ENCODE measurements at regions of chr4 and their contacts with region 1.

Region 1: GRCh38 chr4:26061248-26061986 is 147.4 kb downstream of the SMIM20 start:
- DNase-seq: peak; percentile 67
- CTCF ChIP-seq: peak; percentile 84

Region 2: DNA sequence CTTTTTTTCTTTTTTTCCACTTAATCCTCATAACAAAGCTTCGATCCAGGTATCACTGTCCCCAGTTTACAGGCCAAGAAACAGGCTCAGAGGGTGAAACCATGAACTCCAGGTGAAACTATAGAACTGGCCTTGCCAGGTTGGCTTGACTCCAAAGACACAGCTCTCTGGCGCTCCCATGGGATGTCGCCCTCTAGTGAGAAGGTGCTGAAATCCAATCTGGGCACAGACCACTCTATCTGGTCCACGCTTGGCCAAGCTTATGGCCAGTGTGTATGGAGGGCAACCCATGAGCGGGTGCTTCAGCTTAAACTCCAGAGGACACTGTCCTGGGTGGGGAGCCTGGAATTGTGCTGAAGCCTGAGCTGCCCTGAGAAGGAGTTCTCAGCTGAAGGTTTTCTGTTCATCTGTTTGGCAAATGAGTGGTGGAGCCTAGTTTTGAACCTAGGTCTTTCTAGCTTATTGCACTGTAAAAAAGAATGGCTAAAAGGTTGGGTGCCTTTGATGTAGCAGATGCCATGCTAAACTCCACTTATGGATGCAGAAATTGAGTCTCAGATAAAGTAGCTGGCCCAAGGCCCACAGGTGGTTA is 269.1 kb before region 1 on chr4:
- in situ Hi-C with region 1: no loop called
- DNase-seq: no peak
- CTCF ChIP-seq: peak; percentile 36

Region 3: GRCh38 chr4:26320538-26321325 is 259.3 kb after region 1 on chr4 and contains the start of gene RBPJ:
- in situ Hi-C with region 1: loop called (anchors 10 kb)
- DNase-seq: peak; percentile 84
- CTCF ChIP-seq: no peak

Region 4: GRCh38 chr4:26404743-26405206 is 343.4 kb after region 1 on chr4:
- in situ Hi-C with region 1: loop called (anchors 10 kb)
- DNase-seq: no peak
- CTCF ChIP-seq: no peak

Measured in GM13977 (cell line).